GM10248 (cell line): ENCODE measurements at regions of chr6 and their contacts with region 1.

Region 1: GRCh38 chr6:165744555-165745228 is 81.7 kb upstream of the PDE10A start:
- DNase-seq: no peak
- CTCF ChIP-seq: no peak

Region 2: DNA sequence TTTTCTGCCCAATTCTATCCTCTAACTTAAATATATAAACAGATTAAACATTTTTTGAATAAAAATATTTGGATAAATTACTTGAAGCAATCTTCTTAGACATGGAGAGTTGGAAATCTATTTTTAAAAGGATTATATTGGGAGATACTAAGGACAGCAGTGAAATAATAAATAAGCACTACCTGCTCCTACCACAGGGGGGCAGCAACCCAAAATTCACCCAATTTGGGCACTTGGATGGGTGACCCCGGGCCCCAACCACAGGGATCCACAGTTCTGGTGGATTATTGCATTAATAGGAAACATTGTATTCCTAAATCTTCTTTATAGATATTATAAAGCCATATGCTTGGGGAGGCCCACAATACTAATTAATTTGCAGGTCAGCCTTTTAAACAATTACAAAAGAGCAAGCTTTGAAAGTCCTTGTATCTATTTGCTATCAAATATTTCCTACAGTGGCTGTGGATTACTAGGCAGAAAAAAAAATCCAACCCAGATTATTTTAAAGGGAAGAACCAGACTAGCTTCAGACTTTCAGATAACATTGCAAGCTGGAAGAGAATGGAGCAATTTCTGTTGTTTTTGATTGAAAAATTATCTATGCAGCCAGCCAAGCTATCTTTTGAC is 15.3 kb before region 1 on chr6:
- CTCF ChIA-PET with region 1: interaction called, 11 read pairs
- POLR2A ChIA-PET with region 1: no interaction called
- DNase-seq: peak; percentile 66
- CTCF ChIP-seq: peak; percentile 80

Region 3: DNA sequence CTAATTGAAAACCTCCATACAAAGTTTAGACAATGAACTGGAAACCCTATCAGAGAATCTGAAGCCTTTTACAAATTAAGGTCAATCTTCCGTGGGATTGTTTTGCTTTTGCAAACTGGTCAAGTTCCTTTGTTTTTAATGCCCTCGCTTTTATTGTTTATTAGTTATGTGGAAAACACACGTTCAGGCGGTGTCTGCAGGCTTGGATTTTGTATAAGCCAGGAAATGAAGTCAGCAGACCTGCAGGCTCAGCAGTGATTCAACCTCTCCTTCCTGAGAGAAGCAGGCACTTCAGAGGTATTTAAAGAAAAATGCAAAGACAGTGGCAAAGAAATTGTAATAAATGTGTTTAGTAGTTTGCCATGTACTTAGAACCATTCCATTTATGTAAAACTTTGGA is 21.8 kb after region 1 on chr6:
- CTCF ChIA-PET with region 1: no interaction called
- POLR2A ChIA-PET with region 1: no interaction called
- DNase-seq: no peak
- CTCF ChIP-seq: no peak